Motor neuron (in vitro differentiated cells): ENCODE measurements at regions of chr6 and their contacts with region 1.

Region 1: GRCh38 chr6:56637640-56638039 is 5.0 kb downstream of the DST start:
- ATAC-seq: peak in 3 of 8 experiments; percentile 12 to 33 (median 13)
- H3K4me3 ChIP-seq: no peak overlapping the region
- H3K27ac ChIP-seq: no peak overlapping the region
- H3K4me1 ChIP-seq: no peaks in the 10 kb centered on the region

Region 2: GRCh38 chr6:56699066-56699654 is 61.5 kb after region 1 on chr6:
- in situ Hi-C with region 1: loop called in 1 of 9 experiments (anchors 10 kb)
- ATAC-seq: peak in 4 of 8 experiments; percentile 37 to 83 (median 70)
- H3K4me3 ChIP-seq: no peak overlapping the region
- H3K27ac ChIP-seq: no peak overlapping the region
- H3K4me1 ChIP-seq: no peaks in the 10 kb centered on the region

Region 3: DNA sequence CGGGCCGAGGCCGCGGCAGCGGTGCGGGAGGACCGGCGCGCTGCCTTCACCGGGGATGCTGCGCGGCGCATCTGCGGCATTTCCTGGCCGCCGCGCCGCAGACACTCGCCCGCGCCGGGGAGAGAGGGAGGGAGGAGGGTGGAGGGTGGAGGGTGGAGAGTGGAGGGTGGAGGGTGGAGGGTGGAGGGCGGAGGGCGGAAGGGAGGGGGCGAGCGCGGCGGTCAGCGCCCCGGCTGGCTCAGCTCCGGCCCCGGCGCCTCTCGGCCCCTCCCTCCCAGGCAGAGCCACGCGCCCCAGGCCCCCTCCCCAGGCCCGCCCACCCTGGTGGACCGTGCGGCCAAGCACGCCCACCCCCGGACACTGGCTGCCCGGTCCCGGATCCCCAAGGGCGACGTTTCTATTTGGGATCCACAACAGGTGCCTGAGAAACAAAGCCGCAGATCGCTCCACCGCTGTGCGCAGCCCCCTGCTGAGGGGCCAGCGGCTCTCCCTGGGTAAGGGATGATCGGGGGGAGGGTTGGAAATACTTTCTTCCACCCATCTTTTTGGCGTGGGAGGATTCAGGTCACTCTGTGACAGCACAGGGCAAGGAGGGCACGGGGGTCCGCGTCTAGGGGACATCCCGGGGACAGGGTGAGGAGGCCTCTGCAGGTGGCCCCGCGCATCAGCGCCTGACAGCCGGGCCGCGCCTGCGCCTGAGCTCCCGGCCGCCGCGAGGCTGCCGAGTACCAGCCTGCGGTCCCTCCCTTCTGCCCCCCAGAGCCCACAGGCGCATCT is 206.1 kb after region 1 on chr6:
- in situ Hi-C with region 1: loop called in 4 of 9 experiments (anchors 25 kb)
- ATAC-seq: peak; percentile 64 to 87 (median 84)
- H3K4me3 ChIP-seq: peak overlapping the region; percentile 71 to 99 (median 92)
- H3K27ac ChIP-seq: peak overlapping the region; percentile 81 to 92
- H3K4me1 ChIP-seq: peaks cover 9 to 22% of the 10 kb centered on the region in 2 donors

Region 4: DNA sequence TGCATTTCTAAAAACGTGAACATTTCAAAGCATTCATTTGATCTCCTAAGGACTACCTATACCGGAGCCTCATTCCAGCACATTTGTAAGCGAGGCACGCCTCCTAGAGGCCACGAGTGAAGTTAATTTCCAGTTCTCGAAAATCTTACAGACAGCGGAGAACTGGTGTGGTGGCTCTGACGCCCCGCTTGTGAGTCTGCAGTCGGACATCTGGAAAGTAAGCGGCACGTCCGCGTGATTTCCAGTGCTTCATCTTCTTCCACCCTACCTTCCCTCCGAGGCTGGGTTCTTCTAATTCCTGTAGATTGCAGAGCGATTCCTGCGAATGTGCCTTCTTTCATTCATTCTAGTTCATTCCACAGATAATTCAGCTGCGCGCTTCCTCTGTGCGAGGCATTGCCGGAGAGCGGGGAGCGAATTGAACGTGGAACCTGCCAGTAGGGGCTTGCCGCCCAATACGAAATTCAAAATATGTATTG is 679.0 kb after region 1 on chr6:
- in situ Hi-C with region 1: loop called in 2 of 9 experiments (anchors 25 kb)
- ATAC-seq: peak; percentile 51 to 94 (median 92)
- H3K4me3 ChIP-seq: peak overlapping the region; percentile 55 to 86 (median 65)
- H3K27ac ChIP-seq: no peak overlapping the region
- H3K4me1 ChIP-seq: peaks cover 4% of the 10 kb centered on the region in 2 donors